ENCODE measurements at regions of chr15 and their contacts with region 1.

Region 1: GRCh38 chr15:91921188-91921842 is 67.8 kb downstream of the SLCO3A1 start:
- DNase-seq: no peak
- H3K4me3 ChIP-seq: no peak overlapping the region
- H3K27ac ChIP-seq: peak overlapping the region; percentile 38 to 53
- H3K4me1 ChIP-seq: peaks cover 5 to 37% of the 10 kb centered on the region in 2 donors
- H3K27me3 ChIP-seq: no peaks in the 10 kb centered on the region
- CTCF ChIP-seq: no peak

Region 2: DNA sequence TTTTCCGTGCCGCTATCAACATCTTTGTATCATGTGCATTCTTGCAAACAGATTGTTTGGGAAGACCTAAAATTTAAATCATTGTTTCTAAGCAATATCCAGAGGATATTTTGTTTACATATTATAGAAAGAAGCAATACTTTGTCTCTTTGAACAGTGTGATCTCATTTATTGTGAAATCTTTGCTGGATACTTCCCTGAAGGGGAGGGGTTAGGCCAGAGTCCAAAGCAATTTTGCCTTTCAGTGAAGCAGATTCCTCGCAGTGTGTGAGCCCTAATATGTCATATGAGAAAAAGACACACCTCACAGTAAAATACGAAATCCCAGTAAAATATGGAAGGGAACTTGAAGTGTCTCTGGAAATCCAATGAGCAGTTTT is 226.5 kb before region 1 on chr15:
- intact Hi-C with region 1: loop called (anchors 10 kb)
- DNase-seq: peak in 1 of 2 donors; percentile 81
- H3K4me3 ChIP-seq: peak overlapping the region in 1 of 2 donors; percentile 51
- H3K27ac ChIP-seq: peak overlapping the region; percentile 72 to 81
- H3K4me1 ChIP-seq: peaks cover 0 to 3% of the 10 kb centered on the region in 2 donors
- H3K27me3 ChIP-seq: no peaks in the 10 kb centered on the region
- CTCF ChIP-seq: no peak

Region 3: DNA sequence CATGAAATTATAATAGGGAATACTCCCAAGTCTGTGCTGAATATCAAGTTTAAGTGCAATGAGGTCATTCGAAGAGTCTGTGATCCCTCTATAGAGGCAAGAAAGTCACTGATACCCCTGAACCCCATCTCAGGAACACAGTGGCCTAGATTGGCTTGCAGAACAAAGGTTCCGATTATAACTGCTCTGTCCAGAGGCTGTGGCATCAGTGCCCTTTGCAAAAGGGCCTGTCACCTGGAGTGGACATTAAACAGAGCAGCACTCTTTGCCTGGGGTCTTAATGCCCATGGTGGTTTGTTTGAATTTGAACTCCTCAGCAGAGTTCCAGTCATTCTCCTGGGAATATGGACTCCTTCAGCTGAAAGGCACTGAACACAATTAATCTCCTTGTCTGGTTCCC is 161.8 kb before region 1 on chr15:
- intact Hi-C with region 1: no loop called
- DNase-seq: no peak
- H3K4me3 ChIP-seq: no peak overlapping the region
- H3K27ac ChIP-seq: no peak overlapping the region
- H3K4me1 ChIP-seq: no peaks in the 10 kb centered on the region
- H3K27me3 ChIP-seq: no peaks in the 10 kb centered on the region
- CTCF ChIP-seq: no peak

Measured in ascending aorta (tissue), 2 donors.